Activated CD4-positive, alpha-beta T cell treated with anti-CD3 and anti-CD28 coated beads, Interleukin-2, amount 10 ng/mL, durations not matched to agents 24 days and 14 days (primary cell): ENCODE measurements at regions of chr3 and their contacts with region 1.

Region 1: DNA sequence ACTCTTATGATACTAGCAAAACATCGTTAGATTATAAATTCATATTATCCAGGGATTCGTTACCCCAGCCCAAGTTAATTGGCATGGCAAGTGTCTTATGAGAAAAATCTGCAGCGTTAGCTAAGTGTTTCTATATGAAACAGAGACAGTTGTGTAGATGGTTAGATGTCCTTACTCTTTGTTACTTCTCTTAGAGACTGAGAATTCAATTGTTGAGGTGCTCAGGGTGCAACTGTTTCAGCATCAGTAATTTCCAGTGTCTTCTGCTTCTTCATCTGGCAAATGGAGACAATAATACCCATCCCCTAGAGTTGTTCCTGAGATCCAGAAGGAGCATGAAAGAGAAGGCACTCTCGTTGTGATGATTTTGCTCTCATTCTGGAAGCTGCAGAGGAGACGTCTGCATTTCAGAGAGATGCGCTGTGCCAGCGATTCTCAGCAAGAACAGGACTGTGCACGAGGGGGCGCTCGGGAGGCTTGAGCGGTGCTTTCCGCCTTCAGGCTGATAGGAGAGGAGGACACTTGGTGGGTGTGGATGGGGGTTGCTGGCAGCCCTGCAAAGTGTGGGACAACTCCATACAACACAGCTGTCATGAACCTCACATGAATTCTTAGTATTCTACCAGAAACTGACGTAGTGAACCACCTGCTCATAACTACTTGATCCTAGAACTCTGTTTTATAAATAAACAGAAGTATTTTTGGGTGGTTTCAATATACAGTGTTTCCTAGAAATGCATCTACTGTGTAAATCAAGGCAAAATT is 39.7 kb upstream of the SPSB4 start:
- DNase-seq: peak; percentile 94
- H3K4me3 Mint-ChIP-seq: no peak overlapping the region
- H3K27ac Mint-ChIP-seq: no peak overlapping the region
- H3K4me1 Mint-ChIP-seq: peaks cover 6% of the 10 kb centered on the region
- H3K27me3 Mint-ChIP-seq: peaks cover 35% of the 10 kb centered on the region

Region 2: GRCh38 chr3:140941434-140942220 is 69.8 kb before region 1 on chr3 and contains the start of gene SLC25A36:
- intact Hi-C with region 1: loop called (anchors 5 kb)
- DNase-seq: peak; percentile 98
- H3K4me3 Mint-ChIP-seq: peak within 1 kb of the TSS; percentile 97
- H3K27ac Mint-ChIP-seq: peak within 1 kb of the TSS; percentile 96
- H3K4me1 Mint-ChIP-seq: peaks cover 27% of the 10 kb centered on the region
- H3K27me3 Mint-ChIP-seq: peaks cover 25% of the 10 kb centered on the region
- total RNA-seq, gene SLC25A36: 56.3 and 58.9 TPM in 2 replicates

Region 3: GRCh38 chr3:141000027-141000663 is 11.3 kb before region 1 on chr3:
- intact Hi-C with region 1: no loop called
- DNase-seq: peak; percentile 84
- H3K4me3 Mint-ChIP-seq: no peak overlapping the region
- H3K27ac Mint-ChIP-seq: no peak overlapping the region
- H3K4me1 Mint-ChIP-seq: peaks cover 5% of the 10 kb centered on the region
- H3K27me3 Mint-ChIP-seq: peaks cover 13% of the 10 kb centered on the region